ENCODE measurements at regions of chr7 and their contacts with region 1.

Region 1: GRCh38 chr7:87219545-87220025 is at the start of gene TMEM243:
- DNase-seq: peak; percentile 68 to 81 (median 74)
- ATAC-seq: peak; percentile 74
- H3K4me3 ChIP-seq: peak within 1 kb of the TSS; percentile 35 to 87
- H3K27ac ChIP-seq: peak within 1 kb of the TSS; percentile 67 to 91 (median 83)
- H3K4me1 ChIP-seq: peaks cover 38% of the 10 kb centered on the region
- H3K27me3 ChIP-seq: no peaks in the 10 kb centered on the region
- CTCF ChIP-seq: peak in 3 of 7 experiments; percentile 12 to 37 (median 17)
- POLR2A ChIP-seq: peak; percentile 42 to 75 (median 72)
- total RNA-seq, gene TMEM243: 36.6 to 43.8 TPM

Region 2: GRCh38 chr7:87075671-87076404 is 143.7 kb before region 1 on chr7:
- intact Hi-C with region 1: no loop called
- DNase-seq: no peak
- ATAC-seq: no peak
- H3K4me3 ChIP-seq: no peak overlapping the region
- H3K27ac ChIP-seq: no peak overlapping the region
- H3K4me1 ChIP-seq: no peaks in the 10 kb centered on the region
- H3K27me3 ChIP-seq: no peaks in the 10 kb centered on the region
- CTCF ChIP-seq: no peak
- POLR2A ChIP-seq: no peak

Region 3: GRCh38 chr7:87164433-87164832 is 55.2 kb before region 1 on chr7:
- intact Hi-C with region 1: loop called (anchors 10 kb)
- DNase-seq: no peak
- ATAC-seq: no peak
- H3K4me3 ChIP-seq: no peak overlapping the region
- H3K27ac ChIP-seq: no peak overlapping the region
- H3K4me1 ChIP-seq: no peaks in the 10 kb centered on the region
- H3K27me3 ChIP-seq: no peaks in the 10 kb centered on the region
- CTCF ChIP-seq: no peak
- POLR2A ChIP-seq: no peak